Astrocyte of the cerebellum (primary cell): ENCODE measurements at regions of chr1 and their contacts with region 1.

Region 1: DNA sequence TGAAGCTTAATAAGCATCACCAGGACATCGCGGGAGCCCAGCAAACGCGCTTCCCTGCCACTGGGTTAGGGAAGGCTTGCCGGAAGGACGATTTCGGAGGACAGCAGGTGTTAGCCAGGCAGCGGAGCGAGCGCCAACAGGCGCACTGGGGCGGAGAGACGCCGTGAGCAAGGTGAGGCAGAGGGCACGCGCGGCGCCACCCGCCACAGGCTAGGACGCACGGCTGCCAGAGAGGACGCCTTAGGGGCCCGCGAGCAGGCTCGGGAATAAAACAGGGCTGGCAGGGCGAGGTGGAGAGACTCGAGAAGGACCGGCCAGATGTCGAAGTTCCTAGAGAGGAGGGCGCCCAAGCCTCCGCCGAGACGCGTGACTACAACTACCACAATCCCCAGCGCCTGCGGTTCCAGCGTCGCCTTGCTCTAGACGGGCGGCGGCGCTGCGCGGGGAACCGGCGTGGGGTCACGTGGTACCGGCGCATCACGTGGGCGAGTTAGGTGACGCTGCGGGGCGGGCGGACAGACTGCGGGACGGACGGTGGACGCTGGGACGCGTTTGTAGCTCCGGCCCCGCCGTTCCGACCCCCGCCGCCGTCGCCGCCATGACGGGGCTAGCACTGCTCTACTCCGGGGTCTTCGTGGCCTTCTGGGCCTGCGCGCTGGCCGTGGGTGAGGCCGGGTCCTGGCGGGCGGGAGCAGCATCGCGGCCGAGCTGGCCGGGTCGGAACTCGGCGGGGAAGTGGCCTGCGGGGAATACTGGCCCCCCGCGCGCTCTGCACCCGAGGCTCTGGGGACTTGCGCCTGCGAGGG is at the start of gene ATP6V0B:
- DNase-seq: peak; percentile 80
- H3K4me3 ChIP-seq: peak within 1 kb of the TSS; percentile 95
- CTCF ChIP-seq: no peak

Region 2: DNA sequence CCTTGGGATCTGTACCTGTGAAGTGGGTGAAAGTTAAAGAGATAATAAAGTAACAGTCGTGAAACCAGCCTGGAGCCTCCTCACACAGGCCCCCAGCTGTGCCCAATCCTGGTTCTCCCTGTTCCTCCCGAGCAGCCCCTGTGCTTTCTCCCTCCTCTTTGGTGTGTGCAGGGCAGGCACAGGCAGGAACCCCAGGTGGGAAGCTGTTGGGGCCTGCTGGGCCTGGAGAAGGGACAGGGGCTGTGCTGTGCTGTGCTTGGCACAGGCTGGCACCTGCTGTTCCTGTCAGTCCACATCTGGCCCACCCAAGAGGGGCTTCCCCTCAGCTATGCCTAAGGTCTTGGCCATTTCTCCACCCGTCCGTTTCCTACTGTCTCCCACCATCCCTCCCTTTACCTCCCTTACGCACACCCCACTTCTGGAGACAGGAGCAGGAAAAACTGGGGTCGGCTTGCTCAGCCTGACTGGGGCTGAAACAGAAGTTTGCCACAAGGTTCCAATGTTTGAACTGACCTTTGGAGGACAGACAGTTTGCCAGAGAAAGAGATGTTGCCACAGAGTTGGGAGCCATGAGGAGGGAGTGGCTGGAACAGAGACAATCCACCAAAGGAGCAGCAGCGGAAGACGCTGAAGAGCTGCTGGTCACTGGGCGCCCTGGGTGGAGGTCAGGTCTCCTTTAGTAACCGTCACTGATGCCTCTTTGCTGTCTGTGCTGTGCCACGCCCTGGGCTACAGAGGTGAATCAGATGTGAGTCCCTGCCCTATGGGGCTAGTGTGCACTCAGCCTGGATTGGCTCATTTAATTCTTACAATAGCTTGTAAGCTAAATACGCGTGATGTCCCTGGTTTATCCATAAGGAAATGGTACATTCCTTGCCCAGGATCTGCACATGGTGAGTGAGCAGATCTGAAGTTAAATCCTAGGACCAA is 59.8 kb before region 1 on chr1:
- in situ Hi-C with region 1: no loop called
- DNase-seq: no peak
- H3K4me3 ChIP-seq: no peak overlapping the region
- CTCF ChIP-seq: no peak

Region 3: GRCh38 chr1:44029906-44030604 is 55.4 kb after region 1 on chr1:
- in situ Hi-C with region 1: loop called (anchors 10 kb)
- DNase-seq: peak; percentile 55
- H3K4me3 ChIP-seq: peak overlapping the region; percentile 72
- CTCF ChIP-seq: no peak

Region 4: GRCh38 chr1:44523593-44524591 is 549.2 kb after region 1 on chr1:
- in situ Hi-C with region 1: no loop called
- DNase-seq: no peak
- H3K4me3 ChIP-seq: no peak overlapping the region
- CTCF ChIP-seq: no peak